ENCODE measurements at regions of chr20 and their contacts with region 1.

Region 1: GRCh38 chr20:3218307-3218988 is 9.2 kb downstream of the ITPA start:
- DNase-seq: peak; percentile 76
- H3K4me3 Mint-ChIP-seq: no peak overlapping the region
- H3K27ac Mint-ChIP-seq: no peak overlapping the region
- H3K4me1 Mint-ChIP-seq: peaks cover 21% of the 10 kb centered on the region
- H3K27me3 Mint-ChIP-seq: no peaks in the 10 kb centered on the region

Region 2: GRCh38 chr20:3276680-3277015 is 58.2 kb after region 1 on chr20:
- CTCF ChIA-PET with region 1: interaction called, 15 read pairs
- intact Hi-C with region 1: loop called (anchors 1 kb)
- DNase-seq: peak; percentile 9
- H3K4me3 Mint-ChIP-seq: no peak overlapping the region
- H3K27ac Mint-ChIP-seq: no peak overlapping the region
- H3K4me1 Mint-ChIP-seq: no peaks in the 10 kb centered on the region
- H3K27me3 Mint-ChIP-seq: no peaks in the 10 kb centered on the region

Region 3: DNA sequence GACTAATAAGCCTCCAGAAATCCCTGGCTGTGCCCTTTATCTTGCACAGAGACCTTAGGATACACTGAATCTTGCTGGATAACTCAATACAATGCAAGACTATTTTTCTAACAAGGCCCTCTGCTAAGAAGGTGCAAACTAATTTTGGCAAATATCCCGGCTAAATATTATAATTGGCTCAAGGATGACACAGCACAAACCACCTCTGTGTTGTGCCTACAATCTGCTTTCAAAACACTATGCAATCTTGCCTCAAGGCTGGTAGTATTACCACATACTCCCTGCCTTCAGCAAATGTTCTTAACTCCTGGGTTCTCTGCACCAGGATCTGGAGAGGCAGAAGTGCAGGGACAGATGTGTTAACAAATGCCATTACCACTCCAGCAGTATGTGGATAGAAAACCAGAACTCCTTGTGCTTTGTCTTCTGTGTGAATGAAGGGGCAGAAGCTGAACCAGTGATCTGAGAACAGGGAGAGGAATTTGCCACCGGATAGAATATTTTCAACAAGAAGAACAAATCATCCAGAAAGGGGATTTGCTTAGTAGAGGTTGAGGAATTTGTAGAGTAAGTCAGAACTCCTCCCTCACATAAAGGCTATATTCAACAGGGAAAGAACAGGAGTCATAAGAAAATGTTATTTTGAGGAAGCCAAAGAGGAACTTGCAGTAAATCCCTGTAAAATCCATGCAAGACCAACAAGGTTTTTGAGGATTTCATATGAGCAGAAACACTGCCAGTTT is 94.7 kb after region 1 on chr20:
- CTCF ChIA-PET with region 1: interaction called, 74 read pairs
- intact Hi-C with region 1: loop called (anchors 1 kb)
- DNase-seq: no peak
- H3K4me3 Mint-ChIP-seq: no peak overlapping the region
- H3K27ac Mint-ChIP-seq: no peak overlapping the region
- H3K4me1 Mint-ChIP-seq: no peaks in the 10 kb centered on the region
- H3K27me3 Mint-ChIP-seq: no peaks in the 10 kb centered on the region

Region 4: GRCh38 chr20:3543901-3544507 is 325.6 kb after region 1 on chr20:
- CTCF ChIA-PET with region 1: no interaction called
- intact Hi-C with region 1: no loop called
- DNase-seq: no peak
- H3K4me3 Mint-ChIP-seq: no peak overlapping the region
- H3K27ac Mint-ChIP-seq: no peak overlapping the region
- H3K4me1 Mint-ChIP-seq: no peaks in the 10 kb centered on the region
- H3K27me3 Mint-ChIP-seq: no peaks in the 10 kb centered on the region

Measured in activated naive CD4-positive, alpha-beta T cell treated with anti-CD3 and anti-CD28 coated beads for 36 hours (primary cell).